Activated CD4-positive, alpha-beta T cell treated with anti-CD3 and anti-CD28 coated beads, Interleukin-2, amount 10 ng/mL, durations not matched to agents 7 days and 5 days (primary cell): ENCODE measurements at regions of chr1 and their contacts with region 1.

Region 1: GRCh38 chr1:116139592-116140134 is 28.5 kb downstream of the MAB21L3 start:
- DNase-seq: no peak
- H3K4me3 Mint-ChIP-seq: no peak overlapping the region
- H3K27ac Mint-ChIP-seq: no peak overlapping the region
- H3K4me1 Mint-ChIP-seq: peaks cover 6% of the 10 kb centered on the region
- H3K27me3 Mint-ChIP-seq: peaks cover 6% of the 10 kb centered on the region

Region 2: DNA sequence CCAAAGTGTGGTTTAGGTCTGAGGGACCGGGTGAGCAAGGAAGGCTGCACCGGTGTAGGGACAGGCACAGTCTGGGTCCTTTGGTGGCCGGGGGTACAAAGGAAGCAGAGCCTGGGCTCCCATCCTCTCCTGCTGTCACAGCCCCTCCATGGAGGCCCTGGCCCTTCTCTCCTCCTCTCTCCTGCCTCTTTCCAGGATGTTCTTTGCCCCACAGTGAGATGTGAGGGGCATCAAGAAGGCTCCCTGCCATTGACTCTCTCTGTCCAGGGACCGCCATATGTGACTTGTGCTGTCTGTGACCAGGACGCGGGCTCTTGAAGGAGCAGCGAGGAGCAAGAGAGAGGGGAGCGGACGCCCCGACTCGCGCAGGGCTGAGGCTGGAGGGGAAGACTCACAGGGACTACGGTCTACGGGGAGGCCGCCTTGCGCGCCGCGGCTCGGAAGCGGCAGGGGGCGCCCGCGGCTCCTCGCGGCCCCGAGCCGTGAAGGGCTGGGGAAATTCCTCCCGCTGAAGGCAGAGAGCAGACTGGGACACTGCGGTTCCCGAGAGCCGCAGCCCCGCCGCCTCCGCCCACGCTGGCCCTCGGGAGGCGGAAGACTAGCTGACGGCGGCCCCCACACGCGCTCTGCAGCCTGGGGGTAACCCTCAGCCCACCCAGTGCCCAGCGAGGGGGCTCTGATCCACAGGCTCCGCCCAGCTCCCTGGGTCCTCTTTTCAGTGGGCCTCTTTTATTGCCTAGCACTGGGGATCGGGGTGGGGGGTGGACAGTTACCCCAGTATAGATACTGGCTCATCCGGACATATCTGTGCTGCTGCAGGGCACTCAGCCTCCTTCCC is 12.3 kb after region 1 on chr1:
- CTCF ChIA-PET with region 1: interaction called, 39 read pairs
- POLR2A ChIA-PET with region 1: no interaction called
- DNase-seq: peak; percentile 69
- H3K4me3 Mint-ChIP-seq: peak overlapping the region; percentile 43
- H3K27ac Mint-ChIP-seq: peak overlapping the region; percentile 71
- H3K4me1 Mint-ChIP-seq: peaks cover 18% of the 10 kb centered on the region
- H3K27me3 Mint-ChIP-seq: peaks cover 19% of the 10 kb centered on the region

Region 3: GRCh38 chr1:116504308-116505156 is 364.9 kb after region 1 on chr1:
- CTCF ChIA-PET with region 1: interaction called, 32 read pairs
- POLR2A ChIA-PET with region 1: no interaction called
- DNase-seq: peak; percentile 91
- H3K4me3 Mint-ChIP-seq: peak overlapping the region; percentile 21
- H3K27ac Mint-ChIP-seq: peak overlapping the region; percentile 84
- H3K4me1 Mint-ChIP-seq: peaks cover 82% of the 10 kb centered on the region
- H3K27me3 Mint-ChIP-seq: no peaks in the 10 kb centered on the region